Heart right ventricle (tissue), 16 donors: ENCODE measurements at regions of chr13 and their contacts with region 1.

Region 1: DNA sequence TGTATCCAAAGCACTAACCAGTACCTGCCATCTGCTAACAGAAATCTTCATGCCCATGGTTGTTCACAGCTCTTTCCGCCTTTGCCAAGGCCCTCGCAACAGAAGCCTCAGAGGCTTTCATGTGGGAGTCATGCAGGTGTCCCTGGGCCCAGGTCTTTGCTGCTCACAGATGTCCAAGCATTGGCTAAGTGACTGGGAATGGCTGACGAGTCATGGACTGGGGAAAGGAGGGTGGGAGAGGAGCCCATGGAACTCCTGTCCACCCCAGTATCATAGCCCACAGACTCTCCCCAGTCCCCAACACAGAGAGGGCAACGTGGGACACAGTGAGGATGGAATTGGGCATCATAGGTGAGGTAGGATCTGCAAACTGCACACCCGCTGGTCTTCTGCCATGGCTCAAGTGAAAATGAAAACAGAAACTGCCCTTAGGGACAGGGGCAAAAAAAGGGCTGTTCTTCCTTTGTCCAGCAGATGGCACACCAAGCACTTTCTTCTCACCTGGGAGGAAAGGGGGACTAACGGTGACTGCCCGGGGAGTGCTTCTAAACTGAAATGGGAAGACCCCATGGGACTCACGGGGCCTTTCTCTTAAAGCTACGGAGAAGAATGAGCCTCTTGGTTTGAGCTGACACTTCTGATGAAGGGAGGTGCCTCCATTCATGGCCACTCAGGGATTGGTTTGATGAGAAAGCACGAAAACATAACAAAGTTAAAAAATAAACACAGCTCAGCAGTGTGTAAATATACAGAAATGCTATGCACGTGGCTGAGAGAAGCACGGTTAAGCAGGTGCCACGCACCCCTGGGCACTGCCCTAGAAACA is 11.1 kb upstream of the DHRS12 start:
- DNase-seq: peak in 1 of 2 donors; percentile 66
- ATAC-seq: peak; percentile 49 to 73 (median 64)
- H3K4me3 ChIP-seq: peak overlapping the region in 6 of 10 donors; percentile 20 to 30 (median 26)
- H3K27ac ChIP-seq: peak overlapping the region in 2 of 10 donors; percentile 33 to 66
- H3K4me1 ChIP-seq: peaks cover 4 to 38% (median 22%) of the 10 kb centered on the region in 9 donors
- H3K27me3 ChIP-seq: no peaks in the 10 kb centered on the region
- CTCF ChIP-seq: peak; percentile 75 to 90 (median 85)

Region 2: DNA sequence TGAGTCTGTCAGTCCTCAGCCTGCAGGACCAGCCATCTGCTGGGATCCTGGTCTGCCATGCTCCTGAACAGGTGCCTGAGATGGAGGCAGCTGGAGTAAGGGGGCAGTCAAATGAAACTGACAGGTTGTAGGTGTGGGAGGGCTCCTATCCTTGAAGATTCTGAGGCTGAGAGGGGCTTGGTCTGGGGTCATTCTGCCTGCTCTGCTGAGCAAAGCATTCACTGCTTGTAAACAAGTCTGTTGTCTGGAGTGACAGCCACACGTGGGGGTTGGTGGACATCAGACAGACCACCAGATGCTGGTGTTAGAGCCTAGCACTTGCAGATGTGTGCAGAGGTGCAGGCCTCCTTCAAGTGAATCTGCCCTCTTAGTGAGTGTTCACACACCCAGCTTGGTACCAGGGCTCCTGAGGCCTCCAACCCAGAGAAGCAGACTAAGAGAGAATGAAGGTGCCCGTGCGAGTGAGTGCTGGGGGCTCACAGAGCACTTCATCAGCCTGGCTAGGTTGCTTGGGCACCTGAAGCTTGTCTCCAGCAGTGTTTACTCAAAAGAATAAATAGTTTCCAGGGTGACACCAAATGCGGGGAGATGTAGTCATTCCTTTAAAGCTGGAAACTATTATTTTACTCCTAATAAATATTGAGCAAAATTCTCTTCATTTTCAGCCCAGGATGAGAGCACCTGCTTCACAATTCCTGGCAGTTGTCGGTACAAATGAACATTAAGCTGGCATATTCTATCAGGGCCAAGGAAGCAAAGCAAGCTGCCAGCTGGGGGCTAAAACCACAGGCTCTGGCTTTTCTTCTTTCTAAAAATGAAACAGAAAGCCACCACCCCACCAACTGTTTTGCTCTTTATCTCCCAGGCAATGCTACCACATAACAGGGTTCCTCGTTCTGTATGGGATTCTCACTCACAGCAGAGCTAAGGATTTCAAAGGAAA is 823.2 kb before region 1 on chr13:
- intact Hi-C with region 1: no loop called
- DNase-seq: no peak
- ATAC-seq: peak in 2 of 8 donors; percentile 22 to 36
- H3K4me3 ChIP-seq: no peak overlapping the region
- H3K27ac ChIP-seq: peak overlapping the region in 2 of 10 donors; percentile 24 to 34
- H3K4me1 ChIP-seq: peaks cover 0 to 51% (median 36%) of the 10 kb centered on the region in 9 donors
- H3K27me3 ChIP-seq: no peaks in the 10 kb centered on the region
- CTCF ChIP-seq: no peak

Region 3: DNA sequence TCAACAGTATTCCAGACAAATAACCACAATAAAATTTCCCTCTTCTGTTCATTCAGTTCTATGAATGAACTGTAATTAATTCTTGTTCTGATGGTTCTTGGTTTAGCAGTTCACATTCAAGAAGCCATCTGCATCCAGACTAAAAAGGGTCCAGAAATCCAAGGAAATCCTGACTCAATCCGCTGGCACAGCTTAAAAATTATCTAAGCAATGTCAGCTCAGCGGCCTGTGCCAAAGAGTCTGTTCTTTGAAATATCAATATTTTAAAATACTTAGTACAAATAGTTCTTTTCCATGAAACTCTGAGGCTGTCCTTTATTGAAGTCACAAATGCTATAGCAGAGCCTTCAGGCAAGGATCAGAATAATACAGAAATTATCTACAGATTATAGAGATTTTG is 68.2 kb before region 1 on chr13:
- intact Hi-C with region 1: no loop called
- DNase-seq: no peak
- ATAC-seq: peak in 5 of 8 donors; percentile 39 to 59 (median 42)
- H3K4me3 ChIP-seq: no peak overlapping the region
- H3K27ac ChIP-seq: no peak overlapping the region
- H3K4me1 ChIP-seq: no peaks in the 10 kb centered on the region
- H3K27me3 ChIP-seq: no peaks in the 10 kb centered on the region
- CTCF ChIP-seq: no peak

Region 4: GRCh38 chr13:51832471-51833152 is 17.6 kb after region 1 on chr13:
- intact Hi-C with region 1: loop called in 4 of 10 experiments (anchors 1 to 2 kb)
- DNase-seq: peak in 1 of 2 donors; percentile 57
- ATAC-seq: peak; percentile 79 to 91 (median 90)
- H3K4me3 ChIP-seq: no peak overlapping the region
- H3K27ac ChIP-seq: no peak overlapping the region
- H3K4me1 ChIP-seq: peaks cover 0 to 19% (median 5%) of the 10 kb centered on the region in 9 donors
- H3K27me3 ChIP-seq: no peaks in the 10 kb centered on the region
- CTCF ChIP-seq: peak; percentile 26 to 66 (median 60)

Region 5: GRCh38 chr13:52011632-52012511 is 196.8 kb after region 1 on chr13 and contains the start of gene ALG11:
- intact Hi-C with region 1: loop called in 1 of 10 experiments (anchors 10 kb)
- DNase-seq: peak; percentile 99 to 100
- ATAC-seq: peak; percentile 100
- H3K4me3 ChIP-seq: peak within 1 kb of the TSS; percentile 80 to 97 (median 93)
- H3K27ac ChIP-seq: peak within 1 kb of the TSS; percentile 72 to 89 (median 85)
- H3K4me1 ChIP-seq: peaks cover 0 to 34% (median 27%) of the 10 kb centered on the region in 9 donors
- H3K27me3 ChIP-seq: peaks cover 0 to 19% (median 0%) of the 10 kb centered on the region in 7 donors
- CTCF ChIP-seq: peak in 1 of 9 donors; percentile 5
- total RNA-seq, gene ALG11: 16.5 to 24.9 (median 22.2) TPM